Sigmoid colon (tissue), 7 donors: ENCODE measurements at regions of chr5 and their contacts with region 1.

Region 1: DNA sequence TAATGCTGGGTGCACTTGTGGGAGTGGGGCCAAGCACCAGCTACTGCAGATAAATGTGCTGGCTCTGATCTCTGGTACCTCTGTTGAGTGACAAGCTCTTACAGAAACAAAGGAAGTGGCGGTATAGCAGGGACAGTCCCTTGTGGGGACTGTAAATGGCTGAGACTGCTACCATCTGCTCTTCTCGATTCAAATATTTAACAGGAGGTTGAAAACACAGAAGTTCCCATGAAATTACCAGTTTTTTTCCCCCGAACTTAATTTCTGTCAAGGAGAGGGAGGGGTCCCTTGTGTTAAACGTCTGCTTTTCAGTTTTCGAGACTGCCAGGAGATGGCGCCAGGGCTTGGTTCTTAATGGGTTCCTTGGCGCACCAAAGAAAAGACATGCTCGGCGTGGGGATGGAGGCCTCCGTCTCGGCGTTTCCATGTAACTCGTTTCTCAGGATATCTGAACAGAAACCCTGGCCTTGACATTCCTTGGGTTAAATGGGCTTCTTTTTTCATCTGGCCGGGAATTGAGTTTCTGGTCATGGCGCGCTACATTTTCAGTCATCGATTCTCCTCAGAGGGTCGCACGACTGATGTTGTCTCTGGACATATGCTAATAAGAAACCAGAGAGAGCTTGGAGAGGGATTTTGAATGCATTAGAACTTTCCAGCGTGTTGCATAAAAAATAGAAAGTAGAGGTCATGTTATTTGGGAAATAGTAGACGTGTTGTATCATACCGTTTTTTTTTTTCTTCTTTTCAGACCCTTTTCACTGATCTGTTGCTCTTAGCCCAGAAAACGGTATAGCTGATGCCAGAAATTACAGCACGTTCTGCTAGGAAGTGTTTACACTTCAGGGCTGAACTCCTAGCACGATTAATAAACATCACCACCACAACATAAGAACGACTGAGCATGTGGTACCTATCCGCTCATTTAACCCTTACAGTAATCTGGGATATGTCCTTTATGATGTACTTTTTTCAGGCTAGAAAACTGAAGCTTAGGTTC is 64.0 kb downstream of the CARTPT start:
- DNase-seq: peak; percentile 91
- H3K4me3 ChIP-seq: peak overlapping the region in 3 of 4 donors; percentile 22 to 39 (median 32)
- H3K27ac ChIP-seq: peak overlapping the region; percentile 58 to 71 (median 66)
- H3K4me1 ChIP-seq: peaks cover 0 to 16% (median 11%) of the 10 kb centered on the region in 4 donors
- H3K27me3 ChIP-seq: no peaks in the 10 kb centered on the region
- CTCF ChIP-seq: peak; percentile 80 to 86 (median 83)
- EP300 ChIP-seq: no peak
- POLR2A ChIP-seq: no peak

Region 2: GRCh38 chr5:71508751-71509150 is 274.3 kb before region 1 on chr5:
- intact Hi-C with region 1: no loop called
- DNase-seq: no peak
- H3K4me3 ChIP-seq: no peak overlapping the region
- H3K27ac ChIP-seq: no peak overlapping the region
- H3K4me1 ChIP-seq: no peaks in the 10 kb centered on the region
- H3K27me3 ChIP-seq: no peaks in the 10 kb centered on the region
- CTCF ChIP-seq: no peak
- EP300 ChIP-seq: no peak
- POLR2A ChIP-seq: no peak

Region 3: GRCh38 chr5:71932655-71933338 is 149.7 kb after region 1 on chr5:
- intact Hi-C with region 1: no loop called
- DNase-seq: no peak
- H3K4me3 ChIP-seq: no peak overlapping the region
- H3K27ac ChIP-seq: peak overlapping the region; percentile 40 to 68 (median 49)
- H3K4me1 ChIP-seq: peaks cover 0 to 21% (median 13%) of the 10 kb centered on the region in 4 donors
- H3K27me3 ChIP-seq: no peaks in the 10 kb centered on the region
- CTCF ChIP-seq: no peak
- EP300 ChIP-seq: no peak
- POLR2A ChIP-seq: no peak

Region 4: DNA sequence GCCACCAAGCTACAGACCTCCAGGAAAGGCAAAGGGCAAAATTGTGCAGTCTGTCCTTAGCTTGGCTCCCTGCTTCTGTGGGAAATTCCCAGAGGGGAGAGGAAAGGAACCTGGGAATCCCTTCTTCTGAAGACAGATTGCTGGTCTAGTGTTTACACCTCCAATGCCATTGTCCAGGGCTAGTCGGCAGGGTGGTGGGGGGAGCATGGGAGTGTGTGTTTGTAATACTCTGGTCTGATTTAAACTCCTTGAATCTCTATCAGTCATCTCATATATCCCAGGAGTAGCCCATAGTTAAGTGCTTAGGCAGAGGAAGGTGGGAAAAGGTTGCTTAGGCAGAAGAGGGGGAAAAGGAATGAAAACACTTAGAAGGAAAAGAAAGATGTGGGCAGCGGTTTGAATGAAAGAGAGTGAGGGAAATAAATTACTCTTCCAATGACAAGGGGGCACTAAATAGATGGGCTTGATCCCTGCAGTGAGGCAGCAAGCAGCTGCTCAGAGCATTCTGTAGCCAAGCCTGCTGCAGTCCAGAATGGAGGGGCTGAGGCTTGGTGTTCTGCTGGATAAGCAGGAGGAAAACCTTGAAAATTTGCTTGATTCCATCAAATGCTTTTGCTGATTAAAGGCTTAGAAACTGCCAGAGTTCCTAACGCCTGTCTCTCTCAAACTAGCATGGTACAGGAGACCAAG is 237.4 kb after region 1 on chr5:
- intact Hi-C with region 1: loop called (anchors 5 kb)
- DNase-seq: no peak
- H3K4me3 ChIP-seq: no peak overlapping the region
- H3K27ac ChIP-seq: no peak overlapping the region
- H3K4me1 ChIP-seq: no peaks in the 10 kb centered on the region
- H3K27me3 ChIP-seq: no peaks in the 10 kb centered on the region
- CTCF ChIP-seq: no peak
- EP300 ChIP-seq: no peak
- POLR2A ChIP-seq: no peak

Region 5: DNA sequence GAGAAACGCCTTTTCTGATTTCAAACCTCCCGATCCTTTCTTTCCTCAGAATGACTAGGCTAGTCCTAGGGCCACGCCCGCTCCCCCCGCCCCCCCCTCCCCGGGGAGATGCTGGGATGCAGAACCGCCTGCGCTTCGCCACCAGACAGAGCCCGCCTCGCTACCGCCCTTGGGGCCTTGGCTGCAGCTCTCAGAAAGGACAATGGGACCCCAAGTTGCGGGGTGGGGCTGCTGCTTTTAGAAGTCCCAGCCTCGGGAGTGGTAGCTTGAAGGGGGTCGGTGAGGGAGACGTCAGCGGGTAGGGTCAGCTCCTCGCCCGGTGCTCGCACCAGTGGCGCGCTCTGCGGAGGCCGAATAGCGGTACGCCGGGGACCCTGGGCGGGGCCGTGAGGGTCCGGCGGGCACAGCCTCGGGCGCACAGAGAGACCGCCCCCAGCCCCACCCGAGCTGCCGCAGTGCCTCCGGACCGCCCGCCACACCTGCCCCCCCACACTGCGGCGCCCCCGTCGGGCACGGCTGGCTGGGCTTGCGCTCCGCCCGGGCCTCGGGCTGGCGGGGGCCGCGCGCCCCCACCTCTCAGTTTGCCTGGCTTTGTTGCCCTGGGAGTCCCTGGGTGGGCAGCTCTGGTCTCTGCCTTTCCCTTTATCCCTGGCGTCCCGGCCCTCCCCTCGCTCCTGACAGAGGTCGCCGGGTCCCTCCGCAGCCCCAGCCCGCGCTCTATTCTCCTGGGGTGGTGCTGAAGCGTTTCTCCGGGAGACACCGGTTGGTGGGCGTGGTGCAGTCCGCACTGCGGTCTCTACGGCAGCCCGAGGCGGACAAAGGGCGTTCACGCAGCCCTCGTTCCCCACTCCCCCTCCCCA is 325.4 kb after region 1 on chr5:
- intact Hi-C with region 1: loop called (anchors 5 kb)
- DNase-seq: peak; percentile 85
- H3K4me3 ChIP-seq: peak overlapping the region; percentile 68 to 89 (median 79)
- H3K27ac ChIP-seq: peak overlapping the region; percentile 75 to 87 (median 82)
- H3K4me1 ChIP-seq: peaks cover 0 to 32% (median 19%) of the 10 kb centered on the region in 4 donors
- H3K27me3 ChIP-seq: no peaks in the 10 kb centered on the region
- CTCF ChIP-seq: no peak
- EP300 ChIP-seq: no peak
- POLR2A ChIP-seq: peak in 1 of 2 donors; percentile 23